HCT116 (cell line): ENCODE measurements at regions of chr6 and their contacts with region 1.

Region 1: GRCh38 chr6:138109042-138109997 is 2.1 kb upstream of the PERP start:
- DNase-seq: peak; percentile 78
- ATAC-seq: peak; percentile 11; the same call in 1 of the 2 replicates
- H3K4me3 ChIP-seq: no peak overlapping the region
- H3K27ac ChIP-seq: no peak overlapping the region
- H3K4me1 ChIP-seq: peaks cover 13 to 33% of the 10 kb centered on the region in 2 experiments
- H3K27me3 ChIP-seq: no peaks in the 10 kb centered on the region
- CTCF ChIP-seq: peak; percentile 92 to 99 (median 93)
- POLR2A ChIP-seq: no peak
- RAD21 ChIP-seq: peak; percentile 98

Region 2: GRCh38 chr6:137271245-137272183 is 837.8 kb before region 1 on chr6:
- CTCF ChIA-PET with region 1: no interaction called
- POLR2A ChIA-PET with region 1: no interaction called
- RAD21 ChIA-PET with region 1: no interaction called
- intact Hi-C with region 1: loop called (anchors 5 kb)
- DNase-seq: peak; percentile 65
- ATAC-seq: peak; percentile 84
- H3K4me3 ChIP-seq: no peak overlapping the region
- H3K27ac ChIP-seq: no peak overlapping the region
- H3K4me1 ChIP-seq: no peaks in the 10 kb centered on the region
- H3K27me3 ChIP-seq: no peaks in the 10 kb centered on the region
- CTCF ChIP-seq: peak; percentile 82 to 90 (median 85); a peak in 5 of 6 replicates
- POLR2A ChIP-seq: no peak
- RAD21 ChIP-seq: peak; percentile 87

Region 3: DNA sequence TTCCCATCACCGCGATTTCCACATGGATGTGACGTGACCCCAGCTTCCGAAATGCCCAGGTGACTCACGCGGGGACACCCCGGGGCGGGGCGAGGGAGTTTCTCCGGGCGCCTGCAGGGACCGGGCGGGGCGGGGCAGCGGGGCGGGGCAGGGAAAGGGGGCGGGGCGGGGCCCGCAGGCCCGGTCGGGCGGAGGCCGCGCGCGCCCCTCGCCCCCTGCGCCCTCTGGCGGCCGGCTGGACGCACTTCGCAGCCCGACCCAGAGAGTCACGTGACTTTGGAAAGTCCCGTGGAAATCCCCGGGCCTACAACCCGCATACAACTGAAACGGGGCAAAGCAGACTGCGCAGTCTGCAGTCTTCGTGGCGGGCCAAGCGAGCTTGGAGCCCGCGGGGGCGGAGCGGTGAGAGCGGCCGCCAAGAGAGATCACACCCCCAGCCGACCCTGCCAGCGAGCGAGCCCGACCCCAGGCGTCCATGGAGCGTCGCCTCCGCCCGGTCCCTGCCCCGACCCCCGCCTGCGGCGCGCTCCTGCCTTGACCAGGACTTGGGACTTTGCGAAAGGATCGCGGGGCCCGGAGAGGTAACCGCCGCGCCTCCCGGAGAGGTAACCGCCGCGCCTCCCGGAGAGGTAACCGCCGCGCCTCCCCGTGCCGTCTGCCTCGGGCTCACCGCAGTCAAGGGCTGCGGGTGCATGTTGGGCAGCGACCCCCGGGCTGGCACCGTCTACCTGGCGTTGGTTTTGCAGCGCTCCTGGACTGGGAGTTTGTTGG is 242.2 kb before region 1 on chr6 and contains the start of gene TNFAIP3:
- CTCF ChIA-PET with region 1: no interaction called
- POLR2A ChIA-PET with region 1: no interaction called
- RAD21 ChIA-PET with region 1: no interaction called
- intact Hi-C with region 1: loop called (anchors 5 kb)
- DNase-seq: peak; percentile 74
- ATAC-seq: peak; percentile 89
- H3K4me3 ChIP-seq: peak within 1 kb of the TSS; percentile 63 to 69
- H3K27ac ChIP-seq: peak within 1 kb of the TSS; percentile 57; the same call in 1 of the 2 replicates
- H3K4me1 ChIP-seq: peaks cover 10 to 26% of the 10 kb centered on the region in 2 experiments; a peak in 3 of 4 replicates
- H3K27me3 ChIP-seq: no peaks in the 10 kb centered on the region
- CTCF ChIP-seq: peak; percentile 52 to 69 (median 58); a peak in 5 of 6 replicates
- POLR2A ChIP-seq: no peak
- RAD21 ChIP-seq: peak; percentile 71
- total RNA-seq, gene TNFAIP3: 4.4 TPM

Region 4: DNA sequence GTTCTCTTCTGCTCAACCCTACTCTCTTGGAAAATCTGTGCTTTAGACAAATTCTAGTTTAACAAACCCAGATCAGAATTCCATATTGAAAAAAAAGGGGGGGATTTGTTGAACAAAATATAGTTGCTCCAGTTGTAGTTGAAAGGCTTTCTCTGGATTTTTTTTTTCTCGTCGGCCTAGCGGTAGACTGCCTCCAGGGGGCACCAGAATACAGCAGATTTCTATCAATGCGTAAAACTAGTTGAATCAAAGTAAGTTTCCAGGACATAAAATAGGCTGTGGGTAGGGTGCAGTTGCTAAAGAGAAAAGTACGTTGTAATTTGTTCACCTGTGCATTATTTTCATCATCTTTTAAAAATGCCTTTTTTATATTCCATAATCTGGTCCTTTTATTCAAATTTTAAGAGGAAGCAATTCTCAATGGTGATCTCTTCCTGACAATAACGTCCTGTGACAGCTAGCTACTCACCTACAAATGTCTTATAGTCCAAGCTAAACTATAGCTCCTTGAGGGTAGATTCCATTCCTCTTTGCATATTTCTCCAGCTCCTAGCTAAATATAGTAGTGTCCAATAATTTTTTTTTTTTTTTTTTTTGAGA is 107.5 kb before region 1 on chr6:
- CTCF ChIA-PET with region 1: interaction called, 102 read pairs
- POLR2A ChIA-PET with region 1: interaction called, 13 read pairs
- RAD21 ChIA-PET with region 1: interaction called, 6 to 13 read pairs
- intact Hi-C with region 1: loop called (anchors 1 kb)
- DNase-seq: peak; percentile 48
- ATAC-seq: peak; percentile 52; the same call in 1 of the 2 replicates
- H3K4me3 ChIP-seq: no peak overlapping the region
- H3K27ac ChIP-seq: no peak overlapping the region
- H3K4me1 ChIP-seq: peaks cover 0 to 10% of the 10 kb centered on the region in 2 experiments; a peak in 3 of 4 replicates
- H3K27me3 ChIP-seq: no peaks in the 10 kb centered on the region
- CTCF ChIP-seq: peak; percentile 86 to 95 (median 92)
- POLR2A ChIP-seq: no peak
- RAD21 ChIP-seq: peak; percentile 95

Region 5: DNA sequence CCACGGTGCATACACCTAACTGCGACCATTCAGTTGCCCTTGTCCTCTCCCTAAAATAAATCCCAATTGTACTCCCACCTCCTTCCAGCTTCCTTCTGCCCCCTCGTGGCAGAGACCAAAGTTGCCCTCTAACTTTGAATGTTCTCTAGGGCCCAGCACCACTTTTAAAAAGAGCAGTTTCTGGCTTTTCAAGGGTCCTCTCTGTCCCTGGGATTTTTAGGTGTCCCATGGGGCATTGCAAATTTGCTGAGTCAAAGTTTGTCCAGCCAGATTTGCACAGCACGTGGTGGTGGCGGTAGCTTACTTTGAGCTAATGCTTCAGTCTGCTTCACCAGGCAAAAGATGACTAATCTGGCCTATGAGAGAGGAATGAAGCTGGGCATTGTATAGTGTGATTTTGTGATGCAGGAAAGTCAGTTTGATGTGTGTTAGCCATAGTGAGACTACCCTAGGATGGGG is 102.3 kb before region 1 on chr6:
- CTCF ChIA-PET with region 1: interaction called, 102 read pairs
- POLR2A ChIA-PET with region 1: interaction called, 13 read pairs
- RAD21 ChIA-PET with region 1: interaction called, 6 to 13 read pairs
- intact Hi-C with region 1: loop called (anchors 1 kb)
- DNase-seq: peak; percentile 45
- ATAC-seq: peak; percentile 88
- H3K4me3 ChIP-seq: no peak overlapping the region
- H3K27ac ChIP-seq: no peak overlapping the region
- H3K4me1 ChIP-seq: peaks cover 0 to 17% of the 10 kb centered on the region in 2 experiments; a peak in 3 of 4 replicates
- H3K27me3 ChIP-seq: no peaks in the 10 kb centered on the region
- CTCF ChIP-seq: peak; percentile 64 to 84 (median 83)
- POLR2A ChIP-seq: no peak
- RAD21 ChIP-seq: peak; percentile 57